ENCODE measurements at regions of chr10 and their contacts with region 1.

Region 1: GRCh38 chr10:30722956-30723620 is 93.5 kb upstream of the LYZL2 start:
- DNase-seq: no peak
- H3K4me3 ChIP-seq: no peak overlapping the region
- H3K4me3 Mint-ChIP-seq: no peak overlapping the region
- H3K27ac ChIP-seq: no peak overlapping the region
- H3K27ac Mint-ChIP-seq: peak overlapping the region in 1 of 8 donors; percentile 72
- H3K4me1 ChIP-seq: no peaks in the 10 kb centered on the region
- H3K4me1 Mint-ChIP-seq: peaks cover 0 to 9% (median 2%) of the 10 kb centered on the region in 3 donors
- H3K27me3 ChIP-seq: no peaks in the 10 kb centered on the region
- H3K27me3 Mint-ChIP-seq: peaks cover 0 to 1% of the 10 kb centered on the region in 2 donors

Region 2: GRCh38 chr10:30662814-30663213 is 60.3 kb before region 1 on chr10:
- CTCF ChIA-PET with region 1: no interaction called
- POLR2A ChIA-PET with region 1: no interaction called
- DNase-seq: no peak
- H3K4me3 ChIP-seq: no peak overlapping the region
- H3K4me3 Mint-ChIP-seq: no peak overlapping the region
- H3K27ac ChIP-seq: no peak overlapping the region
- H3K27ac Mint-ChIP-seq: no peak overlapping the region
- H3K4me1 ChIP-seq: no peaks in the 10 kb centered on the region
- H3K4me1 Mint-ChIP-seq: peaks cover 0 to 1% (median 0%) of the 10 kb centered on the region in 3 donors
- H3K27me3 ChIP-seq: no peaks in the 10 kb centered on the region
- H3K27me3 Mint-ChIP-seq: peaks cover 16 to 37% of the 10 kb centered on the region in 2 donors

Region 3: GRCh38 chr10:30701451-30702173 is 21.5 kb before region 1 on chr10:
- CTCF ChIA-PET with region 1: interaction called, 10 read pairs
- POLR2A ChIA-PET with region 1: no interaction called
- DNase-seq: peak; percentile 40 to 84 (median 79)
- H3K4me3 ChIP-seq: peak overlapping the region; percentile 19
- H3K4me3 Mint-ChIP-seq: peak overlapping the region; percentile 77 to 90 (median 86)
- H3K27ac ChIP-seq: peak overlapping the region; percentile 40
- H3K27ac Mint-ChIP-seq: peak overlapping the region; percentile 95 to 99 (median 98)
- H3K4me1 ChIP-seq: peaks cover 85% of the 10 kb centered on the region
- H3K4me1 Mint-ChIP-seq: peaks cover 77 to 89% (median 89%) of the 10 kb centered on the region in 3 donors
- H3K27me3 ChIP-seq: no peaks in the 10 kb centered on the region
- H3K27me3 Mint-ChIP-seq: no peaks in the 10 kb centered on the region

Region 4: GRCh38 chr10:30840406-30841050 is 117.4 kb after region 1 on chr10:
- CTCF ChIA-PET with region 1: no interaction called
- POLR2A ChIA-PET with region 1: no interaction called
- DNase-seq: no peak
- H3K4me3 ChIP-seq: no peak overlapping the region
- H3K4me3 Mint-ChIP-seq: no peak overlapping the region
- H3K27ac ChIP-seq: no peak overlapping the region
- H3K27ac Mint-ChIP-seq: no peak overlapping the region
- H3K4me1 ChIP-seq: no peaks in the 10 kb centered on the region
- H3K4me1 Mint-ChIP-seq: no peaks in the 10 kb centered on the region
- H3K27me3 ChIP-seq: no peaks in the 10 kb centered on the region
- H3K27me3 Mint-ChIP-seq: peaks cover 0 to 3% of the 10 kb centered on the region in 2 donors

Region 5: GRCh38 chr10:30944005-30944404 is 220.9 kb after region 1 on chr10:
- CTCF ChIA-PET with region 1: no interaction called
- POLR2A ChIA-PET with region 1: no interaction called
- DNase-seq: no peak
- H3K4me3 ChIP-seq: no peak overlapping the region
- H3K4me3 Mint-ChIP-seq: no peak overlapping the region
- H3K27ac ChIP-seq: no peak overlapping the region
- H3K27ac Mint-ChIP-seq: no peak overlapping the region
- H3K4me1 ChIP-seq: no peaks in the 10 kb centered on the region
- H3K4me1 Mint-ChIP-seq: peaks cover 3 to 17% (median 6%) of the 10 kb centered on the region in 3 donors
- H3K27me3 ChIP-seq: no peaks in the 10 kb centered on the region
- H3K27me3 Mint-ChIP-seq: no peaks in the 10 kb centered on the region

Measured in CD8-positive, alpha-beta memory T cell (primary cell).